AG04450 (cell line): ENCODE measurements at regions of chr4 and their contacts with region 1.

Region 1: DNA sequence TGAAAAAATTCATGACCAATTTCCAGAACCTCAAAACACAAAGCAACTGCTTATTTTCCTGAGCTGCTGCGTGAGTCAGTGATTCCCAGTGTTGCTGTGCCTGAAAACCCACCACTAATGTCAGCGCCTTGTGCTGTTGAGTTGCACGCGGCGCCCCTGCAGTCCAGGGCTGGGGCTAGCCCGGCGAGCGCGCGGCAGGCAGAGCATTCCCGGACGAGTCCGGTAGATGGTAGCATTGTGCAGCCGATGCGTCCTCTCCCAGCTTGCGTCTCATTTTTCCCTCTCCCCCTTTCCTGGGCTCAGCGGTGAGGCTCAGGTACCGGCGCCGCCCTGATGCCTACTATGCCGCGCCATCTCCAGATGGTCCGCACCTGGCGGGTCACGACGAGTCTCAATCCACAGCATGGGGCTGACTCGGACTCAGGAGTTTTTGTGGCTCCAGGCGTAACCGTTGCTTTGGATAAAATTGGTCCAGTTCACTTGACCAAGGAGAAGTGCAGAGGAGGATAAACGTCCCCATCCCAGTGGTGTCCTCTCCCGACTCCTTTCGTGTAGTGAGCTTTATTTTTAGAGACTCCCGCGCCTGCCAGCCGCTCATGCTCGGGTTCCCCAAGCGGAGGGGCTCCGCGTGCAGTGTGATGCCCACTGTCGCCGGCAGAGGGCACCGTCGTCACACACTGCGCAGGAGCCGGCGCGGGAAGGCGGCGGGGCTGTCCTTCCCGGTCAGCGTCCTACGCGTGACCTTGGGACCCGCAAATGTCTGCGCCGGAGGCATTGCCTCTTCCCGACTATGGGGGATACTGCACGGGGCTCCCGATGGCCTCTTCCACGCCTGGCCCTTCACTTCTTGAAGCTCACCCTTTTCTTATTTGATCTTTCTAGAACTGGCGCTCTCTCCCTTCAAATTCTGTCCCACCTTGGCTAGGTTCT is 53.6 kb upstream of the IGFBP7 start:
- DNase-seq: peak; percentile 60
- H3K4me3 ChIP-seq: peak overlapping the region; percentile 82
- H3K27ac ChIP-seq: no peak overlapping the region
- H3K27me3 ChIP-seq: peaks cover 9% of the 10 kb centered on the region
- CTCF ChIP-seq: peak; percentile 83

Region 2: GRCh38 chr4:56840559-56840958 is 323.2 kb before region 1 on chr4:
- CTCF ChIA-PET with region 1: no interaction called
- POLR2A ChIA-PET with region 1: no interaction called
- DNase-seq: no peak
- H3K4me3 ChIP-seq: no peak overlapping the region
- H3K27ac ChIP-seq: no peak overlapping the region
- H3K27me3 ChIP-seq: no peaks in the 10 kb centered on the region
- CTCF ChIP-seq: no peak

Region 3: DNA sequence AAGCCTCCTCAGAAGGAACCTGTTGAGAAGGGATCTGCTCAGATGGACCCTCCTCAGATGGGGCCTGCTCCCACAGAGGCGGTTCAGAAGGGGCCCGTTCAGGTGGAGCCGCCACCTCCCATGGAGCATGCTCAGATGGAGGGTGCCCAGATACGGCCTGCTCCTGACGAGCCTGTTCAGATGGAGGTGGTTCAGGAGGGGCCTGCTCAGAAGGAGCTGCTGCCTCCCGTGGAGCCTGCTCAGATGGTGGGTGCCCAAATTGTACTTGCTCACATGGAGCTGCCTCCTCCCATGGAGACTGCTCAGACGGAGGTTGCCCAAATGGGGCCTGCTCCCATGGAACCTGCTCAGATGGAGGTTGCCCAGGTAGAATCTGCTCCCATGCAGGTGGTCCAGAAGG is 233.2 kb before region 1 on chr4:
- CTCF ChIA-PET with region 1: no interaction called
- POLR2A ChIA-PET with region 1: no interaction called
- DNase-seq: no peak
- H3K4me3 ChIP-seq: no peak overlapping the region
- H3K27ac ChIP-seq: no peak overlapping the region
- H3K27me3 ChIP-seq: no peaks in the 10 kb centered on the region
- CTCF ChIP-seq: no peak

Region 4: DNA sequence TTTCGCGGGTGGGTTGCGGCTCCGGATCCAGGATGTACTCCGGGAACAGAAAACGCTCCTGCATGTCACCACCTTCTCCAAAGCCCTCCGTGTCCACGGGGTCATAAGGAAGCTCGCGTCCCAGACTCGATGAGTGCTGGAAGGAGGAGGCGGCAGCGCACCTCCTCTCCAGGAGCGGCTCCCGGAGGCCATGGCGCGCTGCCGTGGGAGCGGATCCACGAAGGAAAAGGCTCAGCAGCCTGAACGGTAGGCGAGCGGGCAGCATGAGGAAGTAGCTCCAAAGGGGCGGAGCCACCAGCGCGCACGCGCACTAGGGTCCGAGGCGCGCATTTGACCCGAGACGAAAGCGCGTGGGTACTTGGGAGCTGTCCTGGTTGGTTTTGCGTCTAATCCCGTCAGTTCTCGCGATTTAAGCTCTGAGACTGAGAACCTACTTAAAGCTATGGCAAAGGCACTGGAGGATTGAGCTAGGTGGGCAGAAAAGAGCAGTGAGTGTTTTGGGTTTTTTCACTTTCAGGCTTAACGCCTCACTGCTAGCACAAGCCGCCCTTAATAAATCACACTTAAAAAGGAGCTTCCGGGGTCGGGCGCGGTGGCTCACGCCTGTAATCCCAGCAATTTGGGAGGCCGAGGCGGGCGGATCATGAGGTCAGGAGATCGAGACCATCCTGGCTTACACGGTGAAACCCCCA is 186.3 kb before region 1 on chr4 and contains the start of gene NOA1:
- CTCF ChIA-PET with region 1: interaction called, 22 read pairs
- POLR2A ChIA-PET with region 1: no interaction called
- DNase-seq: peak; percentile 98
- H3K4me3 ChIP-seq: peak within 1 kb of the TSS; percentile 98
- H3K27ac ChIP-seq: peak within 1 kb of the TSS; percentile 68
- H3K27me3 ChIP-seq: no peaks in the 10 kb centered on the region
- CTCF ChIP-seq: peak; percentile 1; the same call in 1 of the 2 replicates
- polyA plus RNA-seq, gene NOA1: 17.1 and 17.8 TPM in 2 replicates

Region 5: GRCh38 chr4:57043347-57044251 is 120.2 kb before region 1 on chr4:
- CTCF ChIA-PET with region 1: interaction called, 179 read pairs
- POLR2A ChIA-PET with region 1: no interaction called
- DNase-seq: no peak
- H3K4me3 ChIP-seq: no peak overlapping the region
- H3K27ac ChIP-seq: peak overlapping the region; percentile 77
- H3K27me3 ChIP-seq: no peaks in the 10 kb centered on the region
- CTCF ChIP-seq: no peak

Region 6: GRCh38 chr4:57080781-57081650 is 82.8 kb before region 1 on chr4:
- CTCF ChIA-PET with region 1: interaction called, 20 read pairs
- POLR2A ChIA-PET with region 1: no interaction called
- DNase-seq: peak; percentile 91
- H3K4me3 ChIP-seq: no peak overlapping the region
- H3K27ac ChIP-seq: peak overlapping the region; percentile 91
- H3K27me3 ChIP-seq: no peaks in the 10 kb centered on the region
- CTCF ChIP-seq: no peak

Region 7: DNA sequence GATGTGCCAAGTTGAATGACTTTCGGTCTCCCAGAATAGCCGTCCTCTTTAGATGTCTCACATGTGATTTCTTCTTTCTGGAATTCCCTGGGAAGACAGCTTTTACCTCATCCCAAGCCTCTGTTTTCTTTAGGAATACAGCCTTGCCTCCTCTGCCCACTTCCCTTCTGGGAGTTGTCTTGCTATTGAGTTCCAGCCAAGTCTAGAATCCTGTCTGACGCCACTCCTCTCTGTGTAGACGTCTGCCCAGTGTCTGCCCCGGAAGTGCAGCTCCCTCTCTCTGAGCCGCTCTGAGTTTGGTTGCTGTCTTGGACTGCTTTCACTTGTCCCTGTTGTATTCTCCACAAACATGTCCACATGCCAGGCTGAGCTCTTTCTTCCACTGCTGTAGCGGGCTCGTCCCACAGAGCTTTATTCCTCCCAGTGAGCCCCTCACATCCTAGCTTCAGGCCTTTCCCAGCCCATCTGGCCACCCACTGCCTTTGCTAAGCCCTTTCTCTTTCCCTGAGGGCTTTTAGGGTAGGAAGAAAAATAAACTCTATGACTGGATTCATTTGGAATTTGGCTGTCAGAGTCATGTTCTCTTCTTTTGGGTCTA is 44.6 kb before region 1 on chr4:
- CTCF ChIA-PET with region 1: interaction called, 32 read pairs
- POLR2A ChIA-PET with region 1: interaction called, 3 read pairs
- DNase-seq: peak; percentile 74
- H3K4me3 ChIP-seq: peak overlapping the region; percentile 50
- H3K27ac ChIP-seq: peak overlapping the region; percentile 95
- H3K27me3 ChIP-seq: no peaks in the 10 kb centered on the region
- CTCF ChIP-seq: no peak

Region 8: GRCh38 chr4:57190601-57191481 is 27.0 kb after region 1 on chr4:
- CTCF ChIA-PET with region 1: interaction called, 29 read pairs
- POLR2A ChIA-PET with region 1: no interaction called
- DNase-seq: no peak
- H3K4me3 ChIP-seq: no peak overlapping the region
- H3K27ac ChIP-seq: no peak overlapping the region
- H3K27me3 ChIP-seq: peaks cover 6% of the 10 kb centered on the region
- CTCF ChIP-seq: peak; percentile 57

Region 9: GRCh38 chr4:57475424-57475823 is 311.6 kb after region 1 on chr4:
- CTCF ChIA-PET with region 1: no interaction called
- POLR2A ChIA-PET with region 1: no interaction called
- DNase-seq: no peak
- H3K4me3 ChIP-seq: no peak overlapping the region
- H3K27ac ChIP-seq: no peak overlapping the region
- H3K27me3 ChIP-seq: no peaks in the 10 kb centered on the region
- CTCF ChIP-seq: no peak